A549 (cell line): ENCODE measurements at regions of chr5 and their contacts with region 1.

Region 1: DNA sequence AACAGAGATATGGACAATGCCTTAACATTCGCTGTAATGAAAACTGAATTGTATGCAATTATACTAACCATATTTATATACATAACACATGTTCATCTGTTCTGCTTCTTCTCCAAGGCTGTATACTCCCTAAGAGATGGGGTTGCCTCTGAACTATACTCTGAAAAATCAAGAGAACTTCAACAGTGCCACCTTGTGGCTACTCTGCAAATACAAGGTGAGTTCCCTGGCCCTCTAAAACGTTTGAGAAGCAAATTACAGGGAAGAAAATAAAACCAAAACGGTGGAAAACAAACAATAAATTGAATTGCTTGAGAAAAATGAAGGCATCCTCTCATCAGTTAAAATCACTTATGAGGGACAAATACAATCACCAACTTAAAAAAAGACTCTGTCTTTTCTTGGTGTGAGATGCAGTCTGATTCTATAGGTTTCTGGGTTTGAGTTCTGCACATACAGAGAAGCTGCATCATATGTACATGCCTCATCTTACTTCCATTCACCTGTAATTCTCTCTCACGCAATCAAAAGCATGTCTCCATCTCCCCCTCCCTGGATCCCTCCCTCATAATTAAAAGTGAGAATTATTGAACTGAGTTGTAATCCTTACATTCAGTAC is 98.6 kb downstream of the FBXW11 start:
- DNase-seq: peak; percentile 25 to 64
- ATAC-seq: peak; percentile 89 to 94; a peak in 5 of 6 replicates
- H3K4me3 ChIP-seq: no peak overlapping the region
- H3K27ac ChIP-seq: no peak overlapping the region
- H3K4me1 ChIP-seq: peaks cover 1% of the 10 kb centered on the region; the same call in 2 of the 3 replicates
- CTCF ChIP-seq: peak; percentile 88
- EP300 ChIP-seq: no peak
- POLR2A ChIP-seq: no peak
- RAD21 ChIP-seq: peak; percentile 77 to 79

Region 2: GRCh38 chr5:171927345-171927941 is 19.6 kb after region 1 on chr5:
- CTCF ChIA-PET with region 1: interaction called, 20 read pairs
- POLR2A ChIA-PET with region 1: no interaction called
- DNase-seq: no peak
- ATAC-seq: no peak
- H3K4me3 ChIP-seq: no peak overlapping the region
- H3K27ac ChIP-seq: no peak overlapping the region
- H3K4me1 ChIP-seq: no peaks in the 10 kb centered on the region
- CTCF ChIP-seq: peak; percentile 63
- EP300 ChIP-seq: no peak
- POLR2A ChIP-seq: no peak
- RAD21 ChIP-seq: no peak

Region 3: DNA sequence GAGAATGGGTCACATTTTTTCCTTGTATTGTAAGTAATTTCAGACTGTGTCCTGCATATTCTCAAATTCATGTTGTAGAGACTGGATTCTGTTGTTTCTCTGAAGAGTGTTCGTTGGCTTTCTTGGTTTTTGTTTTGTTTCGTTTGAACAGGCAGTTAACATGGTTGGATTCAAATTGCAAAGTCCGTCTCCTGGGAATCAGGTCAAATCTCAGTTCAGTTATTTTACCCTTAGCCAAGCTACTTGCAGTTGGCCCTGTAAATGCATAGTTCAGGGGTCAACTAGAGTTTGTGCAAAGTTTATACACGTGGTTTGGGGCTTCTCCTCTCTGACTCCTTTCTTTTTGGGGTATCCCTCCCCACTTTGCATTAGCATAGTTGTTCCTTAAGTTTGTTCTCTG is 120.3 kb after region 1 on chr5:
- CTCF ChIA-PET with region 1: interaction called, 11 read pairs
- POLR2A ChIA-PET with region 1: no interaction called
- DNase-seq: no peak
- ATAC-seq: no peak
- H3K4me3 ChIP-seq: no peak overlapping the region
- H3K27ac ChIP-seq: no peak overlapping the region
- H3K4me1 ChIP-seq: no peaks in the 10 kb centered on the region
- CTCF ChIP-seq: no peak
- EP300 ChIP-seq: no peak
- POLR2A ChIP-seq: no peak
- RAD21 ChIP-seq: no peak